Activated T-helper 2 cell treated with anti-CD3 and anti-CD28 coated beads, Interferon-gamma antibody, Interleukin-2, Interleukin-4, amounts not matched to agents 10 μg/mL and 5 μg/mL and 100 μg/mL, durations not matched to agents 14 hours and 24 hours and 36 hours (primary cell): ENCODE measurements at regions of chr15 and their contacts with region 1.

Region 1: DNA sequence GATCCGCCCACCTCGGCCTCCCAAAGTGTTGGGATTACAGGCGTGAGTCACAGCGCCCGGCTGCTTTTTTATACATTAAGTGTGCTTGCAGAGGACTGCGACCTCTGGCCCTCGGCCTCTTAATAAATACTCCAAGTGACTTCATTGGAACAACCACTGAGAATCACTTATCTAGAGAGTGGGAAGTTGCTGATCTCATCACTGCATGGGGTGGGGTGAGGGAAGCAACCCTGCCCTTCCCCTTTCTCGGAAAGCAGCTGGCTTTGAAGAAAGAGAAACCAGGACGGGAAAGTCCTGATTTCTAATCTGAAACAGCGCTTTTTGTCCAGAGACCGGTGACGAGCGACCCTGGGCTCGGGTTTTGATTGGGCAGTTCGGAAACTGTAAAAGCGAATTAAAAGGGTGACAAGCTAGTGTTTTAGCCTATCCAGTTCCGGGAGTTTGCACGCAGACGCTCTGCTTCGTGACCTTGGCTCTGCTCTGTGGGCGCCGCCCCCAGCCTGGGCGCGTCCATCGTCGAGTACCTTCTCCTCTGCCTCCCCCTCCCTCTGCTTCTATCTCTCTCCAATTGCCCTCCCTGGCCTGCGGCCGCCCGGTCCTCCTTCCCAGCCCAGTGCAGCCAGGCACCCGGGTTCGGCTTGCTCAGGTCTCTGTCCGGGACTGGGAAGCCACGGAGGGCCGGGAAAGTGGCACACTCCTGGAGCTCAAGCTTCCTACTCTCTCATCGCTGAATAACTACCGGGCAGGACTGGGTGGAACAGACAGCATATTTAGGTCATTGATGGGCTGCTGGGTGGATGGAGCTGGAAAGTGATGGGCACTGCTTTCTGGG is 7.5 kb upstream of the TRIM69 start:
- DNase-seq: peak; percentile 97
- H3K4me3 Mint-ChIP-seq: peak overlapping the region; percentile 98
- H3K27ac Mint-ChIP-seq: peak overlapping the region; percentile 97
- H3K4me1 Mint-ChIP-seq: peaks cover 60% of the 10 kb centered on the region
- H3K27me3 Mint-ChIP-seq: no peaks in the 10 kb centered on the region

Region 2: GRCh38 chr15:44286814-44287452 is 441.9 kb before region 1 on chr15:
- intact Hi-C with region 1: loop called (anchors 10 kb)
- DNase-seq: no peak
- H3K4me3 Mint-ChIP-seq: peak overlapping the region; percentile 95
- H3K27ac Mint-ChIP-seq: peak overlapping the region; percentile 99
- H3K4me1 Mint-ChIP-seq: peaks cover 30% of the 10 kb centered on the region
- H3K27me3 Mint-ChIP-seq: peaks cover 8% of the 10 kb centered on the region

Region 3: GRCh38 chr15:44490628-44491027 is 238.2 kb before region 1 on chr15:
- intact Hi-C with region 1: no loop called
- DNase-seq: no peak
- H3K4me3 Mint-ChIP-seq: no peak overlapping the region
- H3K27ac Mint-ChIP-seq: no peak overlapping the region
- H3K4me1 Mint-ChIP-seq: peaks cover 24% of the 10 kb centered on the region
- H3K27me3 Mint-ChIP-seq: no peaks in the 10 kb centered on the region

Region 4: DNA sequence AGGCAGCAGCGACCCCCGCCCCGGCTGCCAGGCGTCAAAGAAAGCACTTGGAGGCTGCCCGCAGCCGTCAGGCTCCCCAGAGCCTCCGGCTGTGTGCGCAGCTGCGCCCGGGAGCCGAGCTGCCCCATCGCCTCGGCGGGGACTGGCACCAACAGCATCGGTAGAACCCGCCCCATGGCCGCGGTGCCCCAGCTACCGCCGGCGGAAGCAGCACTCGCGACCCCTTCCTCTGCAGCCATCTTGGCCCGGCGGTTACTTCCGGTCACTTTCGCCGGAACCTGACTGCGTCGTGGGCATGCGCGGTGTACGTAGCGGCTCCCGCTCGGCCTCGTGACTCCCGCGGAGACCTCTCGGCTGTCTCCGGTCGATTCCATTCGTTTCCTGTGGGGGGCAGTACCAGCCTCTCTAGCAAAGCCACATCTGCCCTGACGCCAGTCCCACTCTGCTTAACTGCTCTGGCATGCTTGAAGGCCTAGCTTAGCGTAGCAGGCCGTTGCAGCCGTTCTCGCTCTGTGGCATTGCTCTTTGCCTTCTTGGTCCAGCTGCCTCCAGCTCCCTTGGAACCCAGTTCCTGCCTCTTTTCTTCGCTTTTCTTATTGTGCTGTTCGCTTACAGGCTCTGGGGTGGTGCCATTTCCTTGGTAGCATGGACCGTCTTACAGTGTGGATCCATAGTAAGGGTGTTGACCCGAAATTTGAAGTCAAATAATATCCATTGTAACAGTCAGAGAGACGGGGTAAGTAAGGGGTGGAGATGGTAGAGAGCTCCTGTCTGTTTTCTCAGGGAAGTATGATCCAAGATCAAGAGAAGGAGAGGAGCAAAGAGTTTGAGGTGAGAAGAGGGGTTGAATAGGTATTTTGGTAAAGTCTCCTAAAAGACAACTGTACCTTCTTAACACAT is 65.1 kb before region 1 on chr15 and contains the start of gene SPG11:
- intact Hi-C with region 1: loop called (anchors 1 kb)
- DNase-seq: peak; percentile 96
- H3K4me3 Mint-ChIP-seq: peak within 1 kb of the TSS; percentile 90
- H3K27ac Mint-ChIP-seq: peak within 1 kb of the TSS; percentile 98
- H3K4me1 Mint-ChIP-seq: peaks cover 49% of the 10 kb centered on the region
- H3K27me3 Mint-ChIP-seq: no peaks in the 10 kb centered on the region
- total RNA-seq, gene SPG11: 71.2 and 75.8 TPM in 2 replicates

Region 5: DNA sequence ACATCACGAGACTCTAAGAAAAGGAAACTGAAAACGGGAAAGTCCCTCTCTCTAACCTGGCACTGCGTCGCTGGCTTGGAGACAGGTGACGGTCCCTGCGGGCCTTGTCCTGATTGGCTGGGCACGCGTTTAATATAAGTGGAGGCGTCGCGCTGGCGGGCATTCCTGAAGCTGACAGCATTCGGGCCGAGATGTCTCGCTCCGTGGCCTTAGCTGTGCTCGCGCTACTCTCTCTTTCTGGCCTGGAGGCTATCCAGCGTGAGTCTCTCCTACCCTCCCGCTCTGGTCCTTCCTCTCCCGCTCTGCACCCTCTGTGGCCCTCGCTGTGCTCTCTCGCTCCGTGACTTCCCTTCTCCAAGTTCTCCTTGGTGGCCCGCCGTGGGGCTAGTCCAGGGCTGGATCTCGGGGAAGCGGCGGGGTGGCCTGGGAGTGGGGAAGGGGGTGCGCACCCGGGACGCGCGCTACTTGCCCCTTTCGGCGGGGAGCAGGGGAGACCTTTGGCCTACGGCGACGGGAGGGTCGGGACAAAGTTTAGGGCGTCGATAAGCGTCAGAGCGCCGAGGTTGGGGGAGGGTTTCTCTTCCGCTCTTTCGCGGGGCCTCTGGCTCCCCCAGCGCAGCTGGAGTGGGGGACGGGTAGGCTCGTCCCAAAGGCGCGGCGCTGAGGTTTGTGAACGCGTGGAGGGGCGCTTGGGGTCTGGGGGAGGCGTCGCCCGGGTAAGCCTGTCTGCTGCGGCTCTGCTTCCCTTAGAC is 17.3 kb before region 1 on chr15 and contains the start of gene B2M:
- intact Hi-C with region 1: loop called (anchors 1 kb)
- DNase-seq: peak; percentile 95
- H3K4me3 Mint-ChIP-seq: peak within 1 kb of the TSS; percentile 98
- H3K27ac Mint-ChIP-seq: peak within 1 kb of the TSS; percentile 99
- H3K4me1 Mint-ChIP-seq: peaks cover 44% of the 10 kb centered on the region
- H3K27me3 Mint-ChIP-seq: no peaks in the 10 kb centered on the region
- total RNA-seq, gene B2M: 4,961 and 5,148 TPM in 2 replicates

Region 6: GRCh38 chr15:45637552-45638033 is 908.8 kb after region 1 on chr15:
- intact Hi-C with region 1: no loop called
- DNase-seq: peak; percentile 47
- H3K4me3 Mint-ChIP-seq: peak overlapping the region; percentile 79
- H3K27ac Mint-ChIP-seq: peak overlapping the region; percentile 95
- H3K4me1 Mint-ChIP-seq: peaks cover 65% of the 10 kb centered on the region
- H3K27me3 Mint-ChIP-seq: no peaks in the 10 kb centered on the region